ENCODE measurements at regions of chr6 and their contacts with region 1.

Region 1: GRCh38 chr6:70706491-70707123 is 38.9 kb downstream of the SMAP1 start:
- DNase-seq: no peak
- H3K4me3 ChIP-seq: no peak overlapping the region
- H3K27ac ChIP-seq: no peak overlapping the region
- H3K4me1 ChIP-seq: no peaks in the 10 kb centered on the region
- H3K27me3 ChIP-seq: no peaks in the 10 kb centered on the region
- CTCF ChIP-seq: peak in 2 of 3 donors; percentile 29 to 42
- EP300 ChIP-seq: no peak
- POLR2A ChIP-seq: no peak

Region 2: GRCh38 chr6:70884074-70884983 is 177.7 kb after region 1 on chr6:
- intact Hi-C with region 1: loop called in 3 of 4 experiments (anchors 5 to 10 kb)
- DNase-seq: peak; percentile 13 to 51 (median 35)
- H3K4me3 ChIP-seq: no peak overlapping the region
- H3K27ac ChIP-seq: no peak overlapping the region
- H3K4me1 ChIP-seq: no peaks in the 10 kb centered on the region
- H3K27me3 ChIP-seq: no peaks in the 10 kb centered on the region
- CTCF ChIP-seq: peak in 2 of 3 donors; percentile 51 to 70
- EP300 ChIP-seq: no peak
- POLR2A ChIP-seq: no peak

Region 3: DNA sequence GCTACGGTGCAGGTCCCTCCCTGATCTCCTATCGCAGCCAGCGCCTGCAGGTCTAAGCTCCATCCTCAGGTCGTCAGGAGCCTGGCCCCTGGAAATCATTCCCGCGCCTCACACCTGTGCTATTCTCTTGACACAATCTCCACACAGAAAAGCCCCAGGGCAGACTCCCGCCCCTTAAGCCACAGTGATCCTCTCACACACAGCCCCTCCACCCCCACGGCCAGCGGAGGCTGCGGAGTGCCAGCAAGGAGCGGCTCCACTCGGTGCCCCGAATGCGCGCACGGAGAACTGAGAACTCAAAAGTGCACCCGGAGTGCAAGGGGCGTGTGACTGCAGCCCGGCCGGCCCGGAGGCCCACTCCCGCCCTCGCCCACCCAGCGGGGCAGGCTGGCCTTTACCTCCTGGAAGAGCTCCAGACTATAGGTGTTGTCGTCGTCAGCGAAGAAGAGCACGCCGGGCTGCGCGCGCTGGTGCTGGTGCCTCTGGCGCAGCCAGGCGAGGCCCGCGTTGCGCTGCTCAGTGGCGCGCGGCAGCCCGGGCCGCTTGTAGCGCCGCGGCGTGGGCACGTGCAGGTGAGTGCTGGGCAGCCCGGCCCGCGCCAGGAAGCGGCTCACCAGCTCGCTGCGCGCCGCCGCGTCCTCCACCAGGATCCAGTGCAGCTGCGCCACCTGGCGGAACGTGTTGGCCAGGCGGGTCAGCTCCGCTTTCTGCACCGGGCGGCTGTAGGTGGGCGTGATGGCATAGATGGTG is 249.0 kb after region 1 on chr6:
- intact Hi-C with region 1: loop called in 1 of 4 experiments (anchors 5 kb)
- DNase-seq: peak; percentile 60 to 84 (median 70)
- H3K4me3 ChIP-seq: peak overlapping the region; percentile 40
- H3K27ac ChIP-seq: no peak overlapping the region
- H3K4me1 ChIP-seq: peaks cover 10% of the 10 kb centered on the region
- H3K27me3 ChIP-seq: no peaks in the 10 kb centered on the region
- CTCF ChIP-seq: peak; percentile 43 to 59 (median 51)
- EP300 ChIP-seq: no peak
- POLR2A ChIP-seq: no peak

Measured in ovary (tissue), 10 donors.